Head of caudate nucleus (tissue), 42 donors: ENCODE measurements at regions of chr2 and their contacts with region 1.

Region 1: DNA sequence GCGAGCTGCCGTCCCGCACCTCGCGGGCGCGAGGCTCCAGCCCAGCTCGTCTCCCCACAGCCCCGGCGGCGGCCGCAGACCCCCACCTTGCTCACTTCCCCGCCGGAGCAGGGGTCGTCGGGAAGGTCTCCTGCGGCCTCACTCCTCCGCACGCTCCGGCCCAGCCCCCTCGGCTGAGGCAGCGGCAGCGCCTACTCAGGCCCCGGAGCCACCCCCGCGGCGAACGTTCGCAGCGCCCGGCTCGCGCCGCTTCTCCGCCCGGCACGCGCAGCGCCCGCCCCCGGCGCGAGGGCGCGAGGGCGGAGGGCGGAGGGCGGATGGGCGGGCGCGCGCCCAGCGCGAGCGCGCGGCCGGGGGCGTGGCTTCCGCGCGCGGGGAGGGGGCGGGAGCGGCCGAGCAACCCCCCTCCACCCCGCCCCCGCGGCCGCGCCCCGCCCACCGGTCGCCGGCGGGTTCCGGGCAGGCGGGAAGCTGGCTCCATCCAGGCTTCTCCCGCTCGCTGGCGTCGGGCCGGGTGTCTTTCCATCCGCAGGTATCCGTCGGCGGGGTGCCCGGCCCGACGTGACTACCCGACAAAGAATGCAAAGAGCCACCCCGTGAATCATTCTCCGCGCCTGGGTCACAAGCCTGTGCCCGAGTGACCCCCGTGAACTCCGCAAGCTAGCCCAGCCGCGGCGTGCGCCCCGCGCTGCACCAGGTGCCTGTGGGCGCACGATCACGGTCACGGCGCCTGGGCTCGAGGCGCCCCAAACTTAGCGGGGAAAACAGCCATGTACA is at the start of gene DTNB:
- DNase-seq: peak; percentile 37 to 87 (median 76)

Region 2: DNA sequence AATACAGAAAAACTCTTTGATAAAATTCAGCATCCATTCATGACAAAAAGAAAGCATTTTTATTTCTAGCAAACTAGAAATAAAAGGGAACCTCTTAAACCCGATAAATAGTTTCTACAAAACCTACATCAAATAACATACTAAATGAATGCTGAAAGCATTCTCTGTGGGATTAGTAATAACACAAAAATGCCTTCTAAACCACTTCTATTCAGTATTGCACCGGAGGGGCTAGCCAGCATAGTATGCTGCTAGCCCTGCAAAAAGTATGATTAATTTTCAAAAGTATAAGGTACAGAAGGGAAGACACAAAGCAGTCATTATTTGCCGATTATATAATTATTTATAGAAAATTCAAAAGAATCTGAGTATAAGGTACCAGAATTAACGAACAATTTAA is 145.3 kb before region 1 on chr2:
- intact Hi-C with region 1: loop called (anchors 5 kb)
- DNase-seq: no peak

Region 3: DNA sequence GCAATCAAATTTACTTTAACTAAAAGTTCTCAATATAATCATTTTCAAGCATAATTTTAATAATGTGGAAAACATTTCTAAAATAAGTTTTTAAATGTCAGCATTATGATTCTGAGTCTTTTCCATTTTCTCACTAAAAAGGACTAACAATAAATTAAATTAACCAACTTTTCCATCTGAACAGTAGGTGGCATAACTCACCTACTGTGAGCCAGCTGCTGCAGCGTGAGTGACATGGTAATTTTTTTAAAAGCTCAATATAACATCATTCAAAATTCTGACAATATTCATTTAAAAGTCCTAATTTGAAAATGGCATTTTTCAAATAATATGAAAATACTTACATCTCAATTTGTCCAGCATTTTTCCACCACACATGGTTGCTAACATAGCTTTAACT is 66.6 kb before region 1 on chr2:
- intact Hi-C with region 1: loop called (anchors 10 kb)
- DNase-seq: peak in 4 of 42 donors; percentile 31 to 46 (median 36)